GM12878 (cell line): ENCODE measurements at regions of chr4 and their contacts with region 1.

Region 1: DNA sequence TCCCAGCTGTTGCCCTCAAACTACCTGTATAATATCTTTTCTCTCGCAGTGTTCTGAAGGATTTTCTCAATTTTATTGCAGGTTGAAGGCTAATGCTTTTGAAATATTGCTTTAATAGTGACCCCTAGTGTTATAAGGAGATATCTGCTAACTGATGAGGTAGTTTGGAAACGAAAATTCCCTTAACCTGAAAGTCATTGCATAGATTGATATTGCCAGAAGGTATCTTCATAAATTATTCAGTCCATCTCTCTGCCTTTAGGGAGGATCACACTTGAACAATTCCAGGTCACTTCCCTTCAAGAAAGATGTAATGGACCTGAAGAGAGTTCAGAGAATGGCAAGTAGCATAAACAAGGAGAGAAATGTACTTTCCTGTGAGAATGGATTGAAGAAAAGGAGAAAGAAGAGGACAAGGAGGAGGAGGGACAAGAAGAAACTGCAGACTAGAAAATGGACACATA is 44.1 kb downstream of the TIGD4 start:
- DNase-seq: peak; percentile 32
- ATAC-seq: peak; percentile 81
- H3K4me3 ChIP-seq: no peak overlapping the region
- H3K27ac ChIP-seq: no peak overlapping the region
- H3K4me1 ChIP-seq: peaks cover 8% of the 10 kb centered on the region; the same call in 1 of the 2 replicates
- H3K27me3 ChIP-seq: no peaks in the 10 kb centered on the region
- CTCF ChIP-seq: peak; percentile 58 to 71 (median 60); a peak in 5 of 6 replicates
- EP300 ChIP-seq: no peak
- POLR2A ChIP-seq: no peak
- RAD21 ChIP-seq: peak; percentile 85

Region 2: DNA sequence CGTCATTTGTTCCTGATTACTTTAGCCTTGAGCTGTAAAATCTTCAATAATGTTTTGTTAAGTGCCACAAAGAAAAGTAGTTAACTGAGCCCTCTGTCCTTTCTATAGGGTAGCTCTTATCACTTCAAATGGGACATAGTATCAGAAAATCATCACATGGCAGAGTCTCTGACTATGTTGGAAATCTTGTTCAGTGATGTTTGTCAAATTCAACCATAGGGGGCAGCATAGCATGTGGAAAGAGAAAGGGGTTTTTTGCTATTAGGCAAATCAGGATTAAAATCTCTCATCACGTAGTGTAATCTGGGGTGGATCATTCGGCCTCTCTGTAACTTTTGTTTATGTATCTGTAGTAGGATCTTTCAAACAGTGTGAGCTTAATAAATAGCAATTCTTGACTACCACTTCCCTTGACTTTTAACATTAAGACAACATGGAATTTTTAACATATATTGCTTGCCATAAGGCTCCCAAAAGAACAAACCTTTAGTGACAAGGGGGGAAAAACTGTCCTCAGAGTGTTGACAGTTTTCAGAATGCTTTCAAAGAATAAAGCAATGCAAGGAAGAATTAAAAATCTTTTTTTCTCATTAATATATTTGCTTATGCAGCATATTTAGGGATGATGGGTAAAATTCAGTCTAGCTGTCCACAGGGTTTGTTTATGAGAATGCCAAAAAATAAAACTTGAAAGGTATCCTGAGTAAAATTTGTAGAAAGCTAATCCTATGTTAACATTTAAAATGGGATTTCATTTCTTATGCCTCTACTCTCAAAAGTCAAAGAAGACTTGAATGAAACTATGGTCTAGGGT is 326.7 kb before region 1 on chr4:
- CTCF ChIA-PET with region 1: interaction called, 25 read pairs
- POLR2A ChIA-PET with region 1: no interaction called
- RAD21 ChIA-PET with region 1: interaction called, 15 read pairs
- SMC1A ChIA-PET with region 1: interaction called, 19 read pairs
- in situ Hi-C with region 1: no loop called
- intact Hi-C with region 1: loop called (anchors 2 kb)
- DNase-seq: no peak
- ATAC-seq: peak; percentile 86
- H3K4me3 ChIP-seq: no peak overlapping the region
- H3K27ac ChIP-seq: no peak overlapping the region
- H3K4me1 ChIP-seq: no peaks in the 10 kb centered on the region
- H3K27me3 ChIP-seq: no peaks in the 10 kb centered on the region
- CTCF ChIP-seq: peak; percentile 53 to 58 (median 58); a peak in 5 of 6 replicates
- EP300 ChIP-seq: no peak
- POLR2A ChIP-seq: no peak
- RAD21 ChIP-seq: peak; percentile 72

Region 3: GRCh38 chr4:152460488-152460887 is 274.9 kb before region 1 on chr4:
- CTCF ChIA-PET with region 1: interaction called, 45 read pairs
- POLR2A ChIA-PET with region 1: no interaction called
- RAD21 ChIA-PET with region 1: interaction called, 20 read pairs
- SMC1A ChIA-PET with region 1: interaction called, 31 read pairs
- in situ Hi-C with region 1: no loop called
- intact Hi-C with region 1: loop called (anchors 2 kb)
- DNase-seq: peak; percentile 43
- ATAC-seq: peak; percentile 32
- H3K4me3 ChIP-seq: no peak overlapping the region
- H3K27ac ChIP-seq: peak overlapping the region; percentile 73
- H3K4me1 ChIP-seq: peaks cover 54% of the 10 kb centered on the region
- H3K27me3 ChIP-seq: no peaks in the 10 kb centered on the region
- CTCF ChIP-seq: peak; percentile 9 to 57 (median 38); a peak in 4 of 6 replicates
- EP300 ChIP-seq: no peak
- POLR2A ChIP-seq: no peak
- RAD21 ChIP-seq: peak; percentile 68

Region 4: DNA sequence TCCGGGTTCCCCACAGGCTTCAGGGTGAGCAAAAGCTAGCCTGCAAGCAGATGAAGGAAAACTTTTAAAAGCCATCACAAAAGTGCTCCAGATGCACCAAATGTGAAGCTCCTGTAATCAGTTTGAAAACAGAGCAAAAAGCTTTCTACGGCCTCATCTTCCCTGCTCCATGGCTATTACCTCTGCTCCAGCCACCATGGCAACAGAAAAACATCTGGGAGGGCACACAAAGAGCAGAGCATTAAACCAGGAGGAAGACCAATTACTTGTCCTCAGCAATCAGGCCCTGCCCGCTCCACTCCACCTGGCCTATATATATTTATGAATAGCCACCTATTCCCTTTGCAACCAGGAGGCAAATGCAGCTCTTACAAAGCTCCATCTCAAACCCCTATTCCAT is 89.2 kb before region 1 on chr4:
- CTCF ChIA-PET with region 1: interaction called, 105 read pairs
- POLR2A ChIA-PET with region 1: no interaction called
- RAD21 ChIA-PET with region 1: interaction called, 39 read pairs
- SMC1A ChIA-PET with region 1: interaction called, 115 read pairs
- in situ Hi-C with region 1: no loop called
- intact Hi-C with region 1: no loop called
- DNase-seq: no peak
- ATAC-seq: no peak
- H3K4me3 ChIP-seq: no peak overlapping the region
- H3K27ac ChIP-seq: no peak overlapping the region
- H3K4me1 ChIP-seq: peaks cover 35% of the 10 kb centered on the region
- H3K27me3 ChIP-seq: no peaks in the 10 kb centered on the region
- CTCF ChIP-seq: no peak
- EP300 ChIP-seq: no peak
- POLR2A ChIP-seq: no peak
- RAD21 ChIP-seq: no peak

Region 5: GRCh38 chr4:152672206-152673092 is 63.0 kb before region 1 on chr4:
- CTCF ChIA-PET with region 1: interaction called, 46 read pairs
- POLR2A ChIA-PET with region 1: no interaction called
- RAD21 ChIA-PET with region 1: interaction called, 27 read pairs
- SMC1A ChIA-PET with region 1: interaction called, 63 read pairs
- in situ Hi-C with region 1: no loop called
- intact Hi-C with region 1: no loop called
- DNase-seq: no peak
- ATAC-seq: no peak
- H3K4me3 ChIP-seq: no peak overlapping the region
- H3K27ac ChIP-seq: no peak overlapping the region
- H3K4me1 ChIP-seq: peaks cover 16% of the 10 kb centered on the region
- H3K27me3 ChIP-seq: no peaks in the 10 kb centered on the region
- CTCF ChIP-seq: no peak
- EP300 ChIP-seq: no peak
- POLR2A ChIP-seq: no peak
- RAD21 ChIP-seq: no peak

Region 6: GRCh38 chr4:152696764-152697261 is 38.6 kb before region 1 on chr4:
- CTCF ChIA-PET with region 1: interaction called, 12 read pairs
- POLR2A ChIA-PET with region 1: interaction called, 4 read pairs
- RAD21 ChIA-PET with region 1: interaction called, 3 read pairs
- SMC1A ChIA-PET with region 1: interaction called, 21 read pairs
- in situ Hi-C with region 1: no loop called
- intact Hi-C with region 1: loop called (anchors 2 kb)
- DNase-seq: peak; percentile 98
- ATAC-seq: peak; percentile 97
- H3K4me3 ChIP-seq: peak overlapping the region; percentile 42; the same call in 1 of the 2 replicates
- H3K27ac ChIP-seq: peak overlapping the region; percentile 71
- H3K4me1 ChIP-seq: peaks cover 20% of the 10 kb centered on the region
- H3K27me3 ChIP-seq: no peaks in the 10 kb centered on the region
- CTCF ChIP-seq: no peak
- EP300 ChIP-seq: peak; percentile 85 to 93; a peak in 3 of 4 replicates
- POLR2A ChIP-seq: no peak
- RAD21 ChIP-seq: no peak

Region 7: GRCh38 chr4:152723236-152723635 is 12.2 kb before region 1 on chr4:
- CTCF ChIA-PET with region 1: interaction called, 16 read pairs
- POLR2A ChIA-PET with region 1: no interaction called
- RAD21 ChIA-PET with region 1: interaction called, 4 read pairs
- SMC1A ChIA-PET with region 1: interaction called, 3 read pairs
- in situ Hi-C with region 1: no loop called
- intact Hi-C with region 1: no loop called
- DNase-seq: no peak
- ATAC-seq: no peak
- H3K4me3 ChIP-seq: no peak overlapping the region
- H3K27ac ChIP-seq: no peak overlapping the region
- H3K4me1 ChIP-seq: no peaks in the 10 kb centered on the region
- H3K27me3 ChIP-seq: 0 out of 4 replicates have a peak, but pooled peaks cover 0 to 2% of the 10 kb centered on the region in 2 experiments
- CTCF ChIP-seq: no peak
- EP300 ChIP-seq: no peak
- POLR2A ChIP-seq: no peak
- RAD21 ChIP-seq: no peak